Mucosa of descending colon (tissue), 3 donors: ENCODE measurements at regions of chr12 and their contacts with region 1.

Region 1: DNA sequence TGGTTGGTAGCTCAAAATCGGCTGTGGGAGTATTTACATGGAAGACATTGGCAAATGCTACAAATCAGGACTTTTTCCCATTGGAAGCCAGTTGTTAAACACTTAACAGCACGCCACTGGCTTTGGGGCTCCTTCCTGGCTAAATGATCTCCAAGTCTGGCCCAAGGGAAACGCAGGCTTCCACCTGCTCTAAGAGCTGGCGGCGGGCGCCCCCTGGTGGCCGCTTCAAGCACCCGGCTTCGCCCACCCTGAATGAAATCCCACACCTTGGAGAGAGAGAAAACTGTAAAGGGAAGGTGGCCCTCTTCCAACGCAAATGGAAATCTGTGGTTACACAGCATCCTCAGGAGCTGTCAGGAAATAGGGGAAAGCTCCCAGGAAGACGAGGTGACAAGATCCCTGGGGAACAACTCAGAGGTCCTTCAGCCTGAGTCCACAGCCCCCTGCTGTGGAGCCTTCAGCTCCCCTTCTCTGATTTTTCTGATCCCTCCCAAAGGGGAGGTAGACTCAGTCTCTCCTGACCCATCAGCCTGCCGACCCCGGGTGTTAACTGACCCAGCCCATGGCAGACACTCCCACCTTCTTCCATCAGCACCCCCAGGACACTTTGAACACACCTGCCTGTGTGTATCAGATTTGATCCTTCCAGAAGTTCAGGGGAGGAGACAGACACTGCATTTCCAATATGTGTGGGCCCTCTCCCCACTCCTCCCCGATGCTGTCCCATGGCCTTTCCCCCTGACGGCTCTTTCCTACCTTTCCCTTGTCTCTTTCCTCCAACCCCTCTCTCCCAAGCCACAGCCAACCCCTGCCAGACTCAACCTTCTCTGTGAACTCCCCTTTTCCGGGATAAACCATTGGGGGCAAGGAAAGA is 15.4 kb downstream of the SELPLG start:
- DNase-seq: peak; percentile 82 to 86 (median 82)
- ATAC-seq: peak; percentile 87
- H3K4me3 ChIP-seq: no peak overlapping the region
- H3K4me1 ChIP-seq: peaks cover 6% of the 10 kb centered on the region
- CTCF ChIP-seq: peak; percentile 80

Region 2: GRCh38 chr12:108542320-108542719 is 76.0 kb before region 1 on chr12:
- intact Hi-C with region 1: no loop called
- DNase-seq: no peak
- ATAC-seq: no peak
- H3K4me3 ChIP-seq: no peak overlapping the region
- H3K4me1 ChIP-seq: no peaks in the 10 kb centered on the region
- CTCF ChIP-seq: no peak

Region 3: DNA sequence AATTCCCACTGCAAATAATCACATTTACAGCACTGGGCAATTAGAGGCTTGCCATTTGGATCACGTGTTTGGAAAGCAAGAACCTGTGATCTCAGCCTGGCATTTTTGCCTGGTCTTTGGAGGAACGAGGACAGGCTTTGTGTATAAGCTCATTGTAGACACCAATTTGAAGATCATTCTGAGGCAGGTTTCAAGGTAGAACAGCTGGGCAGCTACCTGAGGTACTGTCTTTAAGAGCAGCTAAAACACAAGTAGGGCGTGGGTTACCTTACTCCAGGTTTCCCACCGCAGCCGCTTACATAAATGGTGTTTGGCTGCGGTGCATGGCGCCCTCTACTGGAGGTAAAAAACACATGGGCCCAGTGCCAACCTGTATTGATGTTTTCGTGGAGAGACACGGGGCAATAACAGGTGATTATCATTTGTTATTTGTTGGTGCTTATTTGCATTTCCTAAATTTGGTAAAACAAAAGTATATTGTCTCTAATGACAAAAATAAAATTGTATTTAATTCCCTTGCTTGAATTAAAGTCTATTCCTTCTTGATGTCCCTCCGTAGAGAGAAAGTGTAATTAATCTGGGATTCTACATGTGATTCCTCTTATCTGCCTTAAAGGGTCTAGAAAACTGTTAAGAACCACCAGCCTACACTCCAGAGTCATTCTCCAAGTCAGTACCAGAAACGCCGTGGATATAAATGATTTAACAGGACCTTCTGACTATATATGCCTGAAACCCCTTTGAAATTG is 332.8 kb after region 1 on chr12:
- intact Hi-C with region 1: loop called in 1 of 2 experiments (anchors 5 kb)
- DNase-seq: peak; percentile 60 to 89 (median 83)
- ATAC-seq: peak; percentile 95
- H3K4me3 ChIP-seq: no peak overlapping the region
- H3K4me1 ChIP-seq: no peaks in the 10 kb centered on the region
- CTCF ChIP-seq: peak; percentile 63